ENCODE measurements at regions of chr7 and their contacts with region 1.

Region 1: GRCh38 chr7:117092785-117093184 is 139.5 kb downstream of the ST7 start:
- DNase-seq: no peak

Region 2: DNA sequence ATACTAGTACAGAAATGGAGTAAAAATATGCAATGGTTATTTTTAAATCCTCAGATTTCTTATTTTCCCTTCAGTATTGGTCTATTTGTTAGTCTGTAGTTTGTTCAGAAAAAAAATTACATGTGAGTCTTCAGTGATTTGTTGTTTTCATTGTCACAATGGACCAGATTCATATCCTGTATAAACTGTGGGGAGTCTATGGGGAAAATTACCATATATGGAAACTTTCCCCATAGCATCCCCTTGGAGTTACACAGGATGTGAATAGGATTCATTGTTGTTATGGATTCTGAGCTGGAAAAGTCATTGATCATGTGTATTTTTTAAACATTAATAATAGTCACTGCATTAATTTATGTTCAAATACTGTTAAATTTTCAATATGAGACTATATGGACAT is 66.9 kb before region 1 on chr7:
- intact Hi-C with region 1: no loop called
- DNase-seq: no peak

Region 3: GRCh38 chr7:117047496-117047895 is 45.3 kb before region 1 on chr7:
- intact Hi-C with region 1: loop called in 1 of 2 experiments (anchors 1 kb)
- DNase-seq: no peak

Region 4: DNA sequence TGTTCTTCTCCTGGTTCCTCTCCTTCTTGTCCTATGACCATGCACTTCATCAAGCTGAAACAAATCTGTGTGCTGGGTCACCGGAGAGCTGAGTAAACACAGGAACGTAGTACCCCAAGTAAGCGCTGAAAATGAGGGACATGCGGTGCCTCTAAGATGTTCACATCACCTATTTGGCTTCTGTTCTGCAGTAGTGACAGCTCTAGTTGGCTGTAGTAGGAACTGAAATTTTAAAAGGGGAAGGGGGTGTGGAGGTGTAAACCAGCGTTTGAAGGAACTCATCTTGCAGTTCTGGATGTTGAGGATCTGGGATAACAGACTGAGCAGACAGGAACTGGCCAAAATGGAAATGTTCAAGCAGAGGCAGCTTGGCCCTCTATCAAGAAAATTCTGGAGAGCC is 144.9 kb after region 1 on chr7:
- intact Hi-C with region 1: no loop called
- DNase-seq: no peak